Panc1 (cell line): ENCODE measurements at regions of chr5 and their contacts with region 1.

Region 1: GRCh38 chr5:171759777-171760176 is 25.8 kb upstream of the SMIM23 start:
- DNase-seq: no peak
- ATAC-seq: no peak
- H3K4me3 ChIP-seq: no peak overlapping the region
- H3K27ac ChIP-seq: no peak overlapping the region
- H3K4me1 ChIP-seq: 0 out of 2 replicates have a peak, but pooled peaks cover 3% of the 10 kb centered on the region
- H3K27me3 ChIP-seq: no peaks in the 10 kb centered on the region
- CTCF ChIP-seq: no peak

Region 2: GRCh38 chr5:171505473-171506043 is 254.2 kb before region 1 on chr5:
- CTCF ChIA-PET with region 1: no interaction called
- POLR2A ChIA-PET with region 1: no interaction called
- in situ Hi-C with region 1: no loop called
- intact Hi-C with region 1: no loop called
- DNase-seq: no peak
- ATAC-seq: no peak
- H3K4me3 ChIP-seq: no peak overlapping the region
- H3K27ac ChIP-seq: no peak overlapping the region
- H3K4me1 ChIP-seq: no peaks in the 10 kb centered on the region
- H3K27me3 ChIP-seq: no peaks in the 10 kb centered on the region; the same call in 1 of the 2 replicates
- CTCF ChIP-seq: no peak

Region 3: DNA sequence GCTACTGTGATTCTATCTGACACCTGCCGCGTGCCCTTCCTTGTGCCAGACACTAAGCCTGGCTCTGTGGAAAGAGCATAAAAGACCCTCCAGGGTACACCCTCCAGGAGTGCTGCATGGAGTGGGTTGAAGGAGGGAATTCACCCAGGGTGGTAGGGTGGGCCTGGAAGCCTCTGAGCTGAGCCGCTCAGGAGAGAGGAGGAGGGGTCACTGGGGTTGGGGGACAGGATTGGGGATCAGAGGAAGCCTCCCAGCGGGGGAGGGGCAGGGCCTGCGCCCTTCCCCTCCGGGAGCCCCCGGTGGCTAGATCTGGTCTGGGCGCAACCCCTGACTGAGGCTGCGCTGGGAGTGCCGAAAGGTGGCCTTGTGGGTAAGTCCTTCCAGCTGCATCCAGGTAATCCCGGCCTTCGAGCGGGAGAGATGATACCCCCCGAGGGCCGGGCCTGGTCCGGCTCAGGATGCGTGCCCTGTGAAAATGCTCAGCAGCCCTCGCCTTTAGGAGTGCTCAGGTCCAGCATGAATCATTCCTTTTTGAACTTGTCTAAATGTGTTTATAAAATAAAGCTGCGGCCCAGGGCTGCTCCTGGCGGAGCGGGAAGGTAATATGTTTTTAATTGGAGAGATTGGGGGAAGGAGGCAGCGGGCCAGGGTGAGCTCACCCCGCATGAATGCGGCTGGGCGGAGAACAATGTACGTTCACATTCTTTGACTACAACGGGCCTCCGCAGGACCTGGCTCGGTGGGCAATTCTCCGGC is 92.3 kb before region 1 on chr5:
- CTCF ChIA-PET with region 1: no interaction called
- POLR2A ChIA-PET with region 1: no interaction called
- in situ Hi-C with region 1: no loop called
- intact Hi-C with region 1: no loop called
- DNase-seq: no peak
- ATAC-seq: no peak
- H3K4me3 ChIP-seq: no peak overlapping the region
- H3K27ac ChIP-seq: no peak overlapping the region
- H3K4me1 ChIP-seq: no peaks in the 10 kb centered on the region
- H3K27me3 ChIP-seq: peaks cover 8% of the 10 kb centered on the region
- CTCF ChIP-seq: no peak

Region 4: GRCh38 chr5:171721464-171721863 is 38.3 kb before region 1 on chr5:
- CTCF ChIA-PET with region 1: no interaction called
- POLR2A ChIA-PET with region 1: no interaction called
- in situ Hi-C with region 1: no loop called
- intact Hi-C with region 1: loop called (anchors 1 kb)
- DNase-seq: no peak
- ATAC-seq: no peak
- H3K4me3 ChIP-seq: no peak overlapping the region
- H3K27ac ChIP-seq: no peak overlapping the region
- H3K4me1 ChIP-seq: no peaks in the 10 kb centered on the region
- H3K27me3 ChIP-seq: peaks cover 33% of the 10 kb centered on the region
- CTCF ChIP-seq: no peak

Region 5: GRCh38 chr5:171897231-171897630 is 137.5 kb after region 1 on chr5:
- CTCF ChIA-PET with region 1: no interaction called
- POLR2A ChIA-PET with region 1: no interaction called
- in situ Hi-C with region 1: no loop called
- intact Hi-C with region 1: no loop called
- DNase-seq: no peak
- ATAC-seq: no peak
- H3K4me3 ChIP-seq: no peak overlapping the region
- H3K27ac ChIP-seq: no peak overlapping the region
- H3K4me1 ChIP-seq: no peaks in the 10 kb centered on the region; the same call in 1 of the 2 replicates
- H3K27me3 ChIP-seq: no peaks in the 10 kb centered on the region
- CTCF ChIP-seq: no peak